Transverse colon (tissue), 4 donors: ENCODE measurements at regions of chr1 and their contacts with region 1.

Region 1: DNA sequence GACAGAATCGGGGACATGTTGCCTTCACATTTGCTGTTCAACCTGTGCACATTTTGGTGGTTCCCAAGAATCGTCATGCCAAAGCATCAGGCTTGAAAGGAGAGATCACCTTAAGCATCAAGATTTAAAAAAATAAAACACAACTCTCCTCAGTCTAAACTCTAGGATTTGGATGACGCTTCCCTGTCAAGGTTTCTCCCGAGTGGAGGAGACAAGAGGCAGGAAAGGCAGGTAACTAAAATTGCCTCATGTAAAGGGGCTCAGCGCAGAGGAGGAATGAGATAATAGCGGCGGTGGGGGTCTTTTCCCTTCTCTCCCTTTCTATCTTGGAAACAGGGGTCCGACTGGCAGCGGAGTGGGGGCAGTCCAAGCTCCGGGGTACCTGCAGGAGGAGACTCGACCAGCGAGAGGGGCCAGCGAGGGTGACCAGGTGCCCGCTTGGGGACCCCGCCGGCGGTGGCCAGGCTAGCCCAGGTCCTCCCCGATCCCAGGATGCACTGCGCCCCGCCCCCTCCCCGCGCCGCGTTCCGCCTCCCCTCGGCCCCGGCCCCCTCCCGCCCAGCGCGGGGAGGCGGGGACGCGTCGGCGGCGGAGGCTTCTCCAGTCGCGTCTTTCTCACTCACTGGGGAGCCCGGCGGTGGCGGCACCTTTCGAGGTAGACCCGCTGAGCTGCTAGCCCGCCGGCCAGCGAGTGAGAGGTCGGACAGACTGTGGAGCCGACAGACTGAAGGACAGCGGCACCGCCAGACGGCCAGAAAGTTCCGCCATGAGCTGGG is at the start of gene FNBP1L:
- DNase-seq: peak; percentile 84
- H3K4me3 ChIP-seq: peak within 1 kb of the TSS; percentile 75 to 90 (median 83)
- H3K27ac ChIP-seq: peak within 1 kb of the TSS; percentile 90 to 94 (median 92)
- H3K4me1 ChIP-seq: peaks cover 0 to 41% (median 10%) of the 10 kb centered on the region in 4 donors
- H3K27me3 ChIP-seq: no peaks in the 10 kb centered on the region
- CTCF ChIP-seq: no peak
- EP300 ChIP-seq: no peak
- POLR2A ChIP-seq: peak; percentile 75
- total RNA-seq, gene FNBP1L: 31.0 to 69.4 (median 49.0) TPM

Region 2: DNA sequence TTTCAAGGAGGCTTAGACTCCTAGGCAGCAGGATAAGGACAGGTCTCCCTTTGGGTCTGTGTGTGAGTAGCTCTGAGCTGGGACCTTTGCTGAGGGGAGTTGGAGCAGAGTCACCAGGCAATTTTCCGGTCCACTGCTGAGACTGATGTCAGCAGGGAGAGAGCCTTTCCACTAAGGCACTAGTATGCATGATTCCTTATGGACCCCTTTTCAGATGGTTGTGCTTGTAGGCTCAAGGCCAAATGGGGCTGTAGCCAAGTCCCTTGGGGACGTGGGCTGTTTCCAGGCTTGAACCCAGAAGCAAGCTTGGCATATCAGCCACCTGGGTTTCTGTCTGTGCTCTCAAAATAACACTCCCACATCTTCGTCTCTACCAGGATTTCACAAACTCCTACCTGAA is 194.2 kb before region 1 on chr1:
- in situ Hi-C with region 1: no loop called
- intact Hi-C with region 1: no loop called
- DNase-seq: no peak
- H3K4me3 ChIP-seq: no peak overlapping the region
- H3K27ac ChIP-seq: no peak overlapping the region
- H3K4me1 ChIP-seq: no peaks in the 10 kb centered on the region
- H3K27me3 ChIP-seq: no peaks in the 10 kb centered on the region
- CTCF ChIP-seq: no peak
- EP300 ChIP-seq: no peak
- POLR2A ChIP-seq: no peak

Region 3: GRCh38 chr1:93304716-93305138 is 143.0 kb before region 1 on chr1:
- in situ Hi-C with region 1: loop called in 1 of 4 experiments (anchors 25 kb)
- intact Hi-C with region 1: no loop called
- DNase-seq: peak; percentile 49
- H3K4me3 ChIP-seq: no peak overlapping the region
- H3K27ac ChIP-seq: no peak overlapping the region
- H3K4me1 ChIP-seq: no peaks in the 10 kb centered on the region
- H3K27me3 ChIP-seq: no peaks in the 10 kb centered on the region
- CTCF ChIP-seq: peak; percentile 81 to 95 (median 84)
- EP300 ChIP-seq: no peak
- POLR2A ChIP-seq: no peak

Region 4: GRCh38 chr1:93463960-93464359 is 16.3 kb after region 1 on chr1:
- in situ Hi-C with region 1: no loop called
- intact Hi-C with region 1: no loop called
- DNase-seq: no peak
- H3K4me3 ChIP-seq: no peak overlapping the region
- H3K27ac ChIP-seq: no peak overlapping the region
- H3K4me1 ChIP-seq: no peaks in the 10 kb centered on the region
- H3K27me3 ChIP-seq: no peaks in the 10 kb centered on the region
- CTCF ChIP-seq: no peak
- EP300 ChIP-seq: no peak
- POLR2A ChIP-seq: no peak

Region 5: GRCh38 chr1:93615582-93616150 is 168.0 kb after region 1 on chr1:
- in situ Hi-C with region 1: loop called in 3 of 4 experiments (anchors 10 to 25 kb)
- intact Hi-C with region 1: no loop called
- DNase-seq: peak; percentile 28
- H3K4me3 ChIP-seq: no peak overlapping the region
- H3K27ac ChIP-seq: peak overlapping the region; percentile 42 to 91 (median 64)
- H3K4me1 ChIP-seq: peaks cover 30 to 76% (median 62%) of the 10 kb centered on the region in 4 donors
- H3K27me3 ChIP-seq: no peaks in the 10 kb centered on the region
- CTCF ChIP-seq: no peak
- EP300 ChIP-seq: no peak
- POLR2A ChIP-seq: no peak

Region 6: DNA sequence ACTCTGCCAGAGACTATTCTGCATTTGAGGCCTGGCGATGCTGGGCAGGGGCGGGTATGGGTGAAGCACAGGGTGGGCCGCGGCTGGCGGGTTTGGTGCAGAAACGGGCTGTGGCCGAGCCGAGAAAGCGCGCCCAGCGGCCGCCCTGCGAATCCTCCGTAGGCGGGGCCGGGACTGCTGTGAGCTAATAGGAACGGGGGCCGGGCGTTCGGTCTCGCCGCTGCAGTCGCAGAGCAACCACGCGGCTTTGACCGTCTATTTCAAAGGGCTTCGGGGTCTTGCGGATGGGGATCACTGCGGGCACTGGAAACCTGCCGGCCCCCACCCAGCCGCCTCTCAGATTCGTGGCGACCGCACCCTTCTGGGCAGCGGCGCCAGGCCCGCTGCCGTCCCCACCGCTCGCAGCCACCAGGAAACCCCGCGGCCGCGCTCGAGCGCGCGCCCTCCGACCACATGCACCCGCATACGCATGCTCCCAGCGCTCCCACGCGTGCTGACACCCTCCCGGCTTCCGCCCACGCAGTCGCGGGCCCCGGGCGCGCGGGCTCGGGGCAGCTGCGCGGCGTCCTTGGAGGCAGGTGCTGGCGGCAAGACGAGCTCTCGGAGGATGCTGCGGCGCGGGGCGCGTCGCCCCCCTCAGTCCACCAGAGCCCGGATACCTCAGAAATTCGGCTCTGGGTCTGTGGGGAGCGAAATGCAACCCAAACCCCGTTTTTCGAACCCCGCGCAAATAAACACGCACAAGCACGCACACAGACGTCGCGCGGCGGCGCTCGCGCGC is 398.7 kb after region 1 on chr1:
- in situ Hi-C with region 1: loop called in 1 of 4 experiments (anchors 25 kb)
- intact Hi-C with region 1: loop called (anchors 10 kb)
- DNase-seq: peak; percentile 91
- H3K4me3 ChIP-seq: peak overlapping the region; percentile 54 to 89 (median 80)
- H3K27ac ChIP-seq: peak overlapping the region; percentile 94 to 100 (median 98)
- H3K4me1 ChIP-seq: peaks cover 11 to 30% (median 20%) of the 10 kb centered on the region in 4 donors
- H3K27me3 ChIP-seq: no peaks in the 10 kb centered on the region
- CTCF ChIP-seq: peak; percentile 32 to 66 (median 47)
- EP300 ChIP-seq: no peak
- POLR2A ChIP-seq: peak; percentile 77